Activated CD4-positive, alpha-beta T cell treated with anti-CD3 and anti-CD28 coated beads for 36 hours (primary cell): ENCODE measurements at regions of chr20 and their contacts with region 1.

Region 1: GRCh38 chr20:9359561-9360308 is 154.7 kb upstream of the LAMP5 start:
- DNase-seq: peak; percentile 10
- ATAC-seq: no peak
- H3K4me3 Mint-ChIP-seq: no peak overlapping the region
- H3K27ac Mint-ChIP-seq: no peak overlapping the region
- H3K4me1 Mint-ChIP-seq: no peaks in the 10 kb centered on the region
- H3K27me3 Mint-ChIP-seq: no peaks in the 10 kb centered on the region

Region 2: GRCh38 chr20:8790442-8791074 is 569.2 kb before region 1 on chr20:
- CTCF ChIA-PET with region 1: no interaction called
- POLR2A ChIA-PET with region 1: no interaction called
- intact Hi-C with region 1: loop called in 1 of 2 experiments (anchors 10 kb)
- DNase-seq: peak; percentile 42
- ATAC-seq: no peak
- H3K4me3 Mint-ChIP-seq: no peak overlapping the region
- H3K27ac Mint-ChIP-seq: no peak overlapping the region
- H3K4me1 Mint-ChIP-seq: no peaks in the 10 kb centered on the region
- H3K27me3 Mint-ChIP-seq: no peaks in the 10 kb centered on the region

Region 3: GRCh38 chr20:9294053-9294452 is 65.7 kb before region 1 on chr20:
- CTCF ChIA-PET with region 1: no interaction called
- POLR2A ChIA-PET with region 1: no interaction called
- intact Hi-C with region 1: loop called in 1 of 2 experiments (anchors 10 kb)
- DNase-seq: no peak
- ATAC-seq: no peak
- H3K4me3 Mint-ChIP-seq: no peak overlapping the region
- H3K27ac Mint-ChIP-seq: no peak overlapping the region
- H3K4me1 Mint-ChIP-seq: no peaks in the 10 kb centered on the region
- H3K27me3 Mint-ChIP-seq: no peaks in the 10 kb centered on the region